IMR-90 (cell line): ENCODE measurements at regions of chr12 and their contacts with region 1.

Region 1: DNA sequence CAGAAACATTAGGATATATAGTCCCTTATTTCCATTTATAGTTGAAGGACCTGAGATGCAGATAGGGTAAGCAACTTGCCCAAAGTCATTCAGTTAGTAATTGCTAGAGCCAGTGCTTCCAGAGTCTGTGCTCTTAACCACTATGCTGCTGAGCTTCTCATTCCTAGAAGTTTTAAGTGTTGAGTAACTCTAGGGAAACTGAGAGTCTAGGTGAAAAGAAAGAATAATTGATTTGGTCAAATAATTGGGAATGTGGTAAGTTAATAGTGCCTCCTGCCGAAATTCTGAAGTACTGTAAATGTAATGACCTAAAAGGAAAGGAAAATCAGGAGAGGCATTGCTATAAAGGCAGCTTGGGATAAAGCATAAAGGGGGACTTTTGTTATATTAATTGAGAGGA is 14.1 kb downstream of the PYROXD1 start:
- DNase-seq: peak; percentile 56
- ATAC-seq: peak; percentile 81
- H3K4me3 ChIP-seq: no peak overlapping the region
- H3K27ac ChIP-seq: no peak overlapping the region
- H3K4me1 ChIP-seq: no peaks in the 10 kb centered on the region
- H3K27me3 ChIP-seq: no peaks in the 10 kb centered on the region
- CTCF ChIP-seq: peak; percentile 43
- POLR2A ChIP-seq: no peak
- RAD21 ChIP-seq: peak; percentile 52

Region 2: GRCh38 chr12:20646239-20646827 is 805.2 kb before region 1 on chr12:
- CTCF ChIA-PET with region 1: no interaction called
- POLR2A ChIA-PET with region 1: no interaction called
- dilution Hi-C with region 1: no loop called
- in situ Hi-C with region 1: loop called (anchors 25 kb)
- intact Hi-C with region 1: loop called (anchors 10 kb)
- DNase-seq: peak; percentile 60
- ATAC-seq: peak; percentile 85
- H3K4me3 ChIP-seq: no peak overlapping the region
- H3K27ac ChIP-seq: no peak overlapping the region
- H3K4me1 ChIP-seq: no peaks in the 10 kb centered on the region
- H3K27me3 ChIP-seq: no peaks in the 10 kb centered on the region
- CTCF ChIP-seq: peak; percentile 65
- POLR2A ChIP-seq: no peak
- RAD21 ChIP-seq: peak; percentile 64

Region 3: GRCh38 chr12:21065845-21066244 is 385.7 kb before region 1 on chr12:
- CTCF ChIA-PET with region 1: no interaction called
- POLR2A ChIA-PET with region 1: no interaction called
- dilution Hi-C with region 1: no loop called
- in situ Hi-C with region 1: no loop called
- intact Hi-C with region 1: no loop called
- DNase-seq: no peak
- ATAC-seq: no peak
- H3K4me3 ChIP-seq: no peak overlapping the region
- H3K27ac ChIP-seq: no peak overlapping the region
- H3K4me1 ChIP-seq: no peaks in the 10 kb centered on the region
- H3K27me3 ChIP-seq: no peaks in the 10 kb centered on the region
- CTCF ChIP-seq: no peak
- POLR2A ChIP-seq: no peak
- RAD21 ChIP-seq: no peak

Region 4: GRCh38 chr12:21248679-21249078 is 202.8 kb before region 1 on chr12:
- CTCF ChIA-PET with region 1: no interaction called
- POLR2A ChIA-PET with region 1: no interaction called
- dilution Hi-C with region 1: no loop called
- in situ Hi-C with region 1: no loop called
- intact Hi-C with region 1: loop called (anchors 5 kb)
- DNase-seq: no peak
- ATAC-seq: no peak
- H3K4me3 ChIP-seq: no peak overlapping the region
- H3K27ac ChIP-seq: no peak overlapping the region
- H3K4me1 ChIP-seq: no peaks in the 10 kb centered on the region
- H3K27me3 ChIP-seq: no peaks in the 10 kb centered on the region
- CTCF ChIP-seq: 0 out of 2 replicates have a peak, but pooled peaks have one; percentile 14
- POLR2A ChIP-seq: no peak
- RAD21 ChIP-seq: no peak

Region 5: GRCh38 chr12:21296751-21297406 is 154.7 kb before region 1 on chr12:
- CTCF ChIA-PET with region 1: interaction called, 5 read pairs
- POLR2A ChIA-PET with region 1: no interaction called
- dilution Hi-C with region 1: no loop called
- in situ Hi-C with region 1: no loop called
- intact Hi-C with region 1: loop called (anchors 5 kb)
- DNase-seq: peak; percentile 2
- ATAC-seq: peak; percentile 72
- H3K4me3 ChIP-seq: no peak overlapping the region
- H3K27ac ChIP-seq: no peak overlapping the region
- H3K4me1 ChIP-seq: no peaks in the 10 kb centered on the region
- H3K27me3 ChIP-seq: no peaks in the 10 kb centered on the region
- CTCF ChIP-seq: peak; percentile 55
- POLR2A ChIP-seq: no peak
- RAD21 ChIP-seq: 0 out of 2 replicates have a peak, but pooled peaks have one; percentile 32